ENCODE measurements at regions of chr2 and their contacts with region 1.

Region 1: DNA sequence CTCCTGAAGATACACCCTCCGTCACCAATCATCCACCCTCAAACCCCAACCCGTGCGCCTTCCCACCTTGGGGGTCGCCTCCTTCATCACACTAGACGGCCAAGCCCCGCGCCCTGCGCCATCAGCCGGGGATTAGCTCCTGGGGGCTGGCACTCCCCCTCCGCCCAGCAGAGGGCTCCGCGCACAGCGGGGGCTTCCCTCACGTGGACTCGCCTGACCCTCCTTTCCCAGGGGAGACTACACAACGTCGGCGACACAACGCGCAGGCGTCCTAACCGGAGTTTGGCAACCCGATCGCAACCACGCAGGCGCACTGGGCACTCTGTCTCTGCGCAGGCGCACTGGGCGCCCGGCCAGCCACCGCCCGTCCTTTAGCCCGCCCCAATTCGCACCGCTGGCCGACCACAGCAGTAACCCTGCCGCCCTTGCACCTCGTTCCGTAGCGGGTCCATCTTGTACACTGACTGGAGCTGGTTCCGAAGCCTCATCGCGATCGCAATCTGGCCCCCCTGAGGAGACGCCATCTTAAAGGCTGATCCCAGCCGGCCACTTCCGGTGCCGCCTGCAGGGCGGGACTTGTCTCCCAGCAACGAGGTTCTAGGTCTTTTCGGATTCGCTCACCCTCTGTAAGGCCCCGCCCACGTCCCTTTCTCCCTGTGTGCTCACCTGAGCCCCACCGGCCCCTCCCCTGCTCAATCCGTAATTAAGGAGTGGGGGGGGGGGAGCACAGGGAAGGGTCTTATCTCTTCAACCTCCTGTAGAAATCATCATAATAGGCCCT is at the start of gene PCGF1:
- DNase-seq: peak; percentile 97 to 99 (median 98)
- ATAC-seq: peak; percentile 96
- H3K4me3 ChIP-seq: peak within 1 kb of the TSS; percentile 96
- H3K4me3 Mint-ChIP-seq: peak within 1 kb of the TSS; percentile 95 to 100 (median 99)
- H3K27ac ChIP-seq: peak within 1 kb of the TSS; percentile 94
- H3K27ac Mint-ChIP-seq: peak within 1 kb of the TSS; percentile 97 to 100 (median 100)
- H3K4me1 ChIP-seq: peaks cover 16 to 29% of the 10 kb centered on the region in 2 donors
- H3K4me1 Mint-ChIP-seq: peaks cover 34 to 66% (median 57%) of the 10 kb centered on the region in 7 donors
- H3K27me3 ChIP-seq: peaks cover 3 to 16% of the 10 kb centered on the region in 2 donors
- H3K27me3 Mint-ChIP-seq: peaks cover 47 to 58% (median 49%) of the 10 kb centered on the region in 5 donors
- total RNA-seq, gene PCGF1: 25.7 to 37.0 (median 31.2) TPM

Region 2: GRCh38 chr2:74472086-74472944 is 35.0 kb before region 1 on chr2 and contains the start of gene MRPL53:
- CTCF ChIA-PET with region 1: no interaction called
- POLR2A ChIA-PET with region 1: interaction called, 10 read pairs
- intact Hi-C with region 1: loop called in 1 of 2 experiments (anchors 1 kb)
- DNase-seq: peak; percentile 91 to 98 (median 95)
- ATAC-seq: peak; percentile 96
- H3K4me3 ChIP-seq: peak within 1 kb of the TSS; percentile 89
- H3K4me3 Mint-ChIP-seq: peak within 1 kb of the TSS; percentile 88 to 99 (median 98)
- H3K27ac ChIP-seq: peak within 1 kb of the TSS; percentile 91
- H3K27ac Mint-ChIP-seq: peak within 1 kb of the TSS; percentile 94 to 99 (median 98)
- H3K4me1 ChIP-seq: peaks cover 14 to 19% of the 10 kb centered on the region in 2 donors
- H3K4me1 Mint-ChIP-seq: peaks cover 9 to 32% (median 29%) of the 10 kb centered on the region in 7 donors
- H3K27me3 ChIP-seq: no peaks in the 10 kb centered on the region
- H3K27me3 Mint-ChIP-seq: no peaks in the 10 kb centered on the region
- total RNA-seq, gene MRPL53: 45.7 to 108 (median 94.5) TPM

Region 3: GRCh38 chr2:74553892-74554645 is 46.7 kb after region 1 on chr2 and contains the start of gene LOXL3:
- CTCF ChIA-PET with region 1: no interaction called
- POLR2A ChIA-PET with region 1: no interaction called
- intact Hi-C with region 1: loop called (anchors 1 to 2 kb)
- DNase-seq: peak in 8 of 9 donors; percentile 63 to 87 (median 76)
- ATAC-seq: peak; percentile 67
- H3K4me3 ChIP-seq: peak within 1 kb of the TSS; percentile 70
- H3K4me3 Mint-ChIP-seq: peak within 1 kb of the TSS; percentile 85 to 96 (median 92)
- H3K27ac ChIP-seq: peak within 1 kb of the TSS; percentile 76
- H3K27ac Mint-ChIP-seq: peak within 1 kb of the TSS; percentile 62 to 95 (median 86)
- H3K4me1 ChIP-seq: peaks cover 7 to 17% of the 10 kb centered on the region in 2 donors
- H3K4me1 Mint-ChIP-seq: peaks cover 9 to 31% (median 18%) of the 10 kb centered on the region in 7 donors
- H3K27me3 ChIP-seq: peaks cover 0 to 10% of the 10 kb centered on the region in 2 donors
- H3K27me3 Mint-ChIP-seq: peaks cover 21 to 27% (median 24%) of the 10 kb centered on the region in 5 donors
- total RNA-seq, gene LOXL3: 0.50 to 6.9 (median 0.81) TPM

Region 4: GRCh38 chr2:74602586-74603281 is 95.4 kb after region 1 on chr2:
- CTCF ChIA-PET with region 1: no interaction called
- POLR2A ChIA-PET with region 1: no interaction called
- intact Hi-C with region 1: no loop called
- DNase-seq: no peak
- ATAC-seq: no peak
- H3K4me3 ChIP-seq: no peak overlapping the region
- H3K4me3 Mint-ChIP-seq: peak overlapping the region in 1 of 10 donors; percentile 16
- H3K27ac ChIP-seq: no peak overlapping the region
- H3K27ac Mint-ChIP-seq: no peak overlapping the region
- H3K4me1 ChIP-seq: no peaks in the 10 kb centered on the region
- H3K4me1 Mint-ChIP-seq: peaks cover 0 to 17% (median 0%) of the 10 kb centered on the region in 7 donors
- H3K27me3 ChIP-seq: no peaks in the 10 kb centered on the region
- H3K27me3 Mint-ChIP-seq: peaks cover 26 to 50% (median 37%) of the 10 kb centered on the region in 5 donors

Region 5: DNA sequence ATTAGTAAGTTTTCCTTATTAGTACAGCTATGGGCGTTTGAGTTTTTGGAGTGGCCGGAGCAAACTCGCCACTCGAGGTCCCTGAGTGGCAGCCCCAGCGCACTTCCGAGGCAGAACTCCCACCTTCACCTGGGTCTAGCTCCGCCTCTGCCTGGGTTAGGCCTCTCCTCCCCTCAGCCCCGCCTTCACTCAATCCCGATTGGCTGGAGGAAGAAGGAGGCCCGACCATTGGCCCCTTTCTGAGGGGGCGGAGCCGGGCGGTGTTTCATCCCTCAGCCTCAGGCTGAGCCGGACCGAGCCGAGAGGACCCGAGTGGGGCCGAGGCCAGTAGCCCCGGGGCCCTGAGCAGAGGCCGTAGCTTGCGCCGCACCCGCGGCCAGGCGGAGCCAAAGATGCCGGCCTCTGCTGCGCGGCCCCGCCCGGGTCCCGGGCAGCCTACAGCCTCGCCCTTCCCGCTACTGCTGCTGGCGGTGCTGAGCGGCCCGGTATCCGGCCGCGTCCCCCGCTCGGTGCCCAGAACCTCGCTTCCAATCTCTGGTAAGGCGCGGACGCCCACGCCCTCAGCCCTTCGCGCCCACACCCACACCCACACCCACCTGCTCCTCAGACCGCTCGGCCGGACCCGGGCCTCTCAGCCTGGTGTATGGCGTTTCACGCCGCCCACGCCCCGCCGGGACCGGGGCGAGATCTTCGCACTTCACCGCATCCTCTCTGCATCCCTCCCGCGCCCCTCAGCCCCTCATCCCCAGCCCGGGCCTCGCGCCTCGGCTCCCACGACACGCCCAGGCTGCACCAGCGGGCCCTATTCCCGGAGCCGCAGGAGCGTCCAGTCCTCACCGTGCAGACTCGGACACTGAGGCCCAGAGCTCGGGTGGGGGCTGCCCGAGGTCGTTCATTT is 146.9 kb after region 1 on chr2 and contains the start of gene SEMA4F:
- CTCF ChIA-PET with region 1: no interaction called
- POLR2A ChIA-PET with region 1: no interaction called
- intact Hi-C with region 1: loop called in 1 of 2 experiments (anchors 10 kb)
- DNase-seq: peak; percentile 85 to 95 (median 92)
- ATAC-seq: peak; percentile 100
- H3K4me3 ChIP-seq: peak within 1 kb of the TSS; percentile 86
- H3K4me3 Mint-ChIP-seq: peak within 1 kb of the TSS; percentile 82 to 97 (median 90)
- H3K27ac ChIP-seq: peak within 1 kb of the TSS; percentile 75
- H3K27ac Mint-ChIP-seq: peak within 1 kb of the TSS in 8 of 9 donors; percentile 59 to 96 (median 85)
- H3K4me1 ChIP-seq: peaks cover 6 to 8% of the 10 kb centered on the region in 2 donors
- H3K4me1 Mint-ChIP-seq: peaks cover 12 to 34% (median 23%) of the 10 kb centered on the region in 7 donors
- H3K27me3 ChIP-seq: no peaks in the 10 kb centered on the region
- H3K27me3 Mint-ChIP-seq: peaks cover 3 to 21% (median 5%) of the 10 kb centered on the region in 5 donors
- total RNA-seq, gene SEMA4F: 5.7 to 23.6 (median 11.0) TPM

Measured in naive thymus-derived CD4-positive, alpha-beta T cell (primary cell).